Activated naive CD4-positive, alpha-beta T cell treated with anti-CD3 and anti-CD28 coated beads for 36 hours (primary cell): ENCODE measurements at regions of chrX and their contacts with region 1.

Region 1: GRCh38 chrX:54529552-54530357 is at the start of gene GNL3L:
- DNase-seq: peak; percentile 84
- H3K4me3 Mint-ChIP-seq: peak within 1 kb of the TSS; percentile 90
- H3K27ac Mint-ChIP-seq: peak within 1 kb of the TSS; percentile 98
- H3K4me1 Mint-ChIP-seq: peaks cover 31% of the 10 kb centered on the region
- H3K27me3 Mint-ChIP-seq: no peaks in the 10 kb centered on the region
- total RNA-seq, gene GNL3L: 47.6 to 47.9 TPM

Region 2: GRCh38 chrX:54182864-54183608 is 346.7 kb before region 1 on chrX and contains the start of gene FAM120C:
- CTCF ChIA-PET with region 1: no interaction called
- intact Hi-C with region 1: loop called (anchors 1 kb)
- DNase-seq: peak; percentile 66
- H3K4me3 Mint-ChIP-seq: peak within 1 kb of the TSS; percentile 75
- H3K27ac Mint-ChIP-seq: peak within 1 kb of the TSS; percentile 84
- H3K4me1 Mint-ChIP-seq: peaks cover 38% of the 10 kb centered on the region
- H3K27me3 Mint-ChIP-seq: no peaks in the 10 kb centered on the region
- total RNA-seq, gene FAM120C: 4.3 to 5.9 TPM

Region 3: DNA sequence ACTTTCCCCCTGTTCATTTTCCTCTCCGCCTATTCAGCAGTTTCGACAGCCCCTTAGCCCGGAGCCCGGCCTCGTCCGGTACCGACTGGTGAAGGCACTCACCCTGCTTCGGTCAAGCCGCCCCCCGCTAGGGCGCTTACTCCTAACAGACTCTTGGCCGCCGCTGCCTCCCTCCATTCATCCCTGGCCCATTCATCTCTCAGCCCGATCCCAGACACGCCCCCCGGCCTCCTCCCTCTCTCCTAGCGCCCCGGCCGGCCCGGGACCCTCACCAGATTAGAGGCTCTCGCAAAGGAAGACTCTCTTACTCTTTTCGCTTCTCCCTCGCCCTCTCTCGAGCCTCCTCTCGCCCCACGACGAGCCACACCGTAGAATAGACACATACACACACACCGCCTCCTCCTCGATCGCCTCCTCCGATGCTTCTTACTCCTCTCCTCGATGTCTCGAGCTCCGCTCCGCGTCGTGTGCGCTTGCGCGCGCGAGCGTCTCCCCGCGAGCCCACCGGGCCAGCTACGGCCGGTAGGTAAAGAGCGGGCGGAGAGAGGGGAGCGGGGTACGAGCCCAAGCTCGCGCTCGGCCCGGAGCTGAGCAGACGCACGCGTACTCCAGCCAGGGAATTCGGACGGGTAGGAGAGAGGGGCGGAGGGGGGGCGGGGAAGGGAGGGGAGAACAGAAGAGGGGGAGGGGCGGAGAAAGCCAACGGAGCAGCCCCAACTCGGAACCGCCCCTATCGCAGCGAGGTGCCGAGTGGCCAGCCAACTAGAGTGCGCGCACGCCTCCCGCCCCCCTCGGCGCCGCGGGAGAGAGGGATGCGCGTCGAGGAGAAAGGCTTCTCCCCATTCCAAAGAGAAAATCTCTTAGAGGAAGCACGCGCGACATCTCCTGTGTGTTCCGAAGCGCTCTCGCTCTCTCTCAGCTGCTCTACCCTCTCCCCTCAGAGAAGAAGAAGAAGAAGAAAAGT is 172.1 kb before region 1 on chrX and contains the start of gene WNK3:
- CTCF ChIA-PET with region 1: no interaction called
- intact Hi-C with region 1: loop called (anchors 1 kb)
- DNase-seq: peak; percentile 47
- H3K4me3 Mint-ChIP-seq: peak within 1 kb of the TSS; percentile 80
- H3K27ac Mint-ChIP-seq: no peak within 1 kb of the TSS
- H3K4me1 Mint-ChIP-seq: peaks cover 12% of the 10 kb centered on the region
- H3K27me3 Mint-ChIP-seq: peaks cover 10% of the 10 kb centered on the region
- total RNA-seq, gene WNK3: 0.25 to 0.60 TPM

Region 4: DNA sequence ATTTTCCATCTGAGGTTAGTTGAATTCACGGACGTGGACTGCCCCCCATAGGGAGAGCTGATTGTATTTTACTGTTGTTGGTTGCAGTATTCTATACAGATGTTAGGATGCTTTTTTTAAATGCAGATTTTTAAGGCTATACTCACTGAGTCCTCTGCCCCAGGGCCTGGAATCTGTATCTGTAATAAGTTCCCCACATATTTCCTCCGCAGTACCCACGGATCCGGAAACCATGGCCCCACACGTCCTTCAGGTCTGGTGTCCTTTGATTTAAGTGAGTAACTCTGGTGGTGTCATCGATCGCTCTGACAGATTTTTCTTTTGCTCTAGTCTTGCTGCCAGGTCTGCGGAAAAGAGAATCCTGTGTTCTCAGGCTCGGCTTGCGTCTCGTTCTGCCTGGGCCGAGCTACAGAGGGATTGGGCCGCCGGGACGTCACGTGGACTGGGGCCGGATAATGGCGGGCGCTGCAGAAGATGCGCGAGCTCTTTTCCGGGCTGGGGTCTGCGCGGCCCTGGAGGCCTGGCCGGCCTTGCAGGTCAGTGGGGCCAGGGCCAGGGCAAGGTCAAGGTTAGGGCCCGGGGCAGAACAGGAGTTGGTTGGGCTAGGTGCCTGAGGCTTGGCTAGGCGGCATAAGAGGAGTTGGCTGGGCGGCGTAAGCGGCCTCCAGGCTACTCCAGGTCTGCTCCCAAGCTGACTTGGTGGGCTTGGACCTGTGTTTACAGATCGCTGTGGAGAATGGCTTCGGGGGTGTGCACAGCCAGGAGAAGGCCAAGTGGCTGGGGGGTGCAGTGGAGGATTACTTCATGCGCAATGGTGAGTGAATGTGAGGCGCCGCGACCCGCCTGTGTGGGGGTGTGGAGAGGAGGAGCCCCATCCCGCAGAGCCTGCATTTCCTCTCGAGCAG is 89.5 kb before region 1 on chrX and contains the start of gene TSR2:
- CTCF ChIA-PET with region 1: no interaction called
- intact Hi-C with region 1: loop called (anchors 1 kb)
- DNase-seq: peak; percentile 86
- H3K4me3 Mint-ChIP-seq: peak within 1 kb of the TSS; percentile 89
- H3K27ac Mint-ChIP-seq: peak within 1 kb of the TSS; percentile 69
- H3K4me1 Mint-ChIP-seq: peaks cover 24% of the 10 kb centered on the region
- H3K27me3 Mint-ChIP-seq: no peaks in the 10 kb centered on the region
- total RNA-seq, gene TSR2: 24.4 to 26.1 TPM

Region 5: GRCh38 chrX:54495814-54496516 is 33.8 kb before region 1 on chrX and contains the start of gene FGD1:
- CTCF ChIA-PET with region 1: no interaction called
- intact Hi-C with region 1: loop called (anchors 2 kb)
- DNase-seq: peak; percentile 45
- H3K4me3 Mint-ChIP-seq: peak within 1 kb of the TSS; percentile 66
- H3K27ac Mint-ChIP-seq: no peak within 1 kb of the TSS
- H3K4me1 Mint-ChIP-seq: peaks cover 1% of the 10 kb centered on the region
- H3K27me3 Mint-ChIP-seq: peaks cover 17% of the 10 kb centered on the region
- total RNA-seq, gene FGD1: 0.30 to 0.38 TPM

Region 6: GRCh38 chrX:54551801-54552200 is 22.0 kb after region 1 on chrX:
- CTCF ChIA-PET with region 1: no interaction called
- intact Hi-C with region 1: no loop called
- DNase-seq: no peak
- H3K4me3 Mint-ChIP-seq: no peak overlapping the region
- H3K27ac Mint-ChIP-seq: no peak overlapping the region
- H3K4me1 Mint-ChIP-seq: no peaks in the 10 kb centered on the region
- H3K27me3 Mint-ChIP-seq: no peaks in the 10 kb centered on the region

Region 7: GRCh38 chrX:54776987-54777672 is 247.4 kb after region 1 on chrX:
- CTCF ChIA-PET with region 1: no interaction called
- intact Hi-C with region 1: no loop called
- DNase-seq: no peak
- H3K4me3 Mint-ChIP-seq: no peak overlapping the region
- H3K27ac Mint-ChIP-seq: no peak overlapping the region
- H3K4me1 Mint-ChIP-seq: peaks cover 3% of the 10 kb centered on the region
- H3K27me3 Mint-ChIP-seq: no peaks in the 10 kb centered on the region

Region 8: GRCh38 chrX:54808605-54809483 is 279.1 kb after region 1 on chrX:
- CTCF ChIA-PET with region 1: no interaction called
- intact Hi-C with region 1: loop called (anchors 1 kb)
- DNase-seq: peak; percentile 92
- H3K4me3 Mint-ChIP-seq: peak overlapping the region; percentile 88
- H3K27ac Mint-ChIP-seq: peak overlapping the region; percentile 88
- H3K4me1 Mint-ChIP-seq: peaks cover 15% of the 10 kb centered on the region
- H3K27me3 Mint-ChIP-seq: no peaks in the 10 kb centered on the region